CD14-positive monocyte (primary cell): ENCODE measurements at regions of chr20 and their contacts with region 1.

Region 1: DNA sequence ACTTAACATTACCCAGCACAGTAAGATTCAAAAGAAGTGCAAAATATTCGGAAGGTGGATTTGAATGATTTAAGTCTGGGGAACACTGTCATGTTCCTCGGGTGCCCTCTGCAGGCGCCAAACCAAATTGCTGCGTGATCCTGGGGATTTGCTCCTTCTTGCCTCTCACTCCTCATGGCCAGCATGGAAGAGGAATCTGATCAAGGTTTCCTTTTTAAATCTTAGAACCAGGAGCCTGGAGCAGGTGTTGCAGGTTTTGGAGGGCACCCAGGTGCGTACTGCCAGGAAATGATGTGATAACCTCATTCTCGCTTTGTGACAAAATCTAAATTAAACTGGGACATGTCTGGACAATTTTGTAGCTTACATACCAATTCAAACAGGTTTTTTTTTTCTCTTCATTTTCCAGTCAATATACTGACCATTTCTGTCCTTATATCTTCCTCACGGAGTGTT is 8.1 kb upstream of the PFDN4 start:
- DNase-seq: peak; percentile 49 to 73 (median 64)
- H3K4me3 ChIP-seq: no peak overlapping the region
- H3K4me3 Mint-ChIP-seq: no peak overlapping the region
- H3K27ac ChIP-seq: no peak overlapping the region
- H3K27ac Mint-ChIP-seq: no peak overlapping the region
- H3K4me1 ChIP-seq: peaks cover 16% of the 10 kb centered on the region in 2 donors
- H3K4me1 Mint-ChIP-seq: peaks cover 20% of the 10 kb centered on the region
- H3K27me3 ChIP-seq: no peaks in the 10 kb centered on the region
- H3K27me3 Mint-ChIP-seq: peaks cover 0 to 3% (median 0%) of the 10 kb centered on the region in 3 donors
- CTCF ChIP-seq: peak; percentile 93

Region 2: GRCh38 chr20:54097236-54097529 is 102.6 kb before region 1 on chr20:
- intact Hi-C with region 1: loop called (anchors 1 to 2 kb)
- DNase-seq: no peak
- H3K4me3 ChIP-seq: no peak overlapping the region
- H3K4me3 Mint-ChIP-seq: no peak overlapping the region
- H3K27ac ChIP-seq: no peak overlapping the region
- H3K27ac Mint-ChIP-seq: no peak overlapping the region
- H3K4me1 ChIP-seq: peaks cover 3 to 8% of the 10 kb centered on the region in 2 donors
- H3K4me1 Mint-ChIP-seq: peaks cover 16% of the 10 kb centered on the region
- H3K27me3 ChIP-seq: no peaks in the 10 kb centered on the region
- H3K27me3 Mint-ChIP-seq: peaks cover 0 to 2% (median 0%) of the 10 kb centered on the region in 3 donors
- CTCF ChIP-seq: no peak